Keratinocyte (primary cell): ENCODE measurements at regions of chr6 and their contacts with region 1.

Region 1: GRCh38 chr6:20038410-20039204 is 173.7 kb downstream of the MBOAT1 start:
- DNase-seq: no peak
- H3K4me3 ChIP-seq: no peak overlapping the region
- H3K27ac ChIP-seq: no peak overlapping the region
- H3K4me1 ChIP-seq: no peaks in the 10 kb centered on the region
- H3K27me3 ChIP-seq: no peaks in the 10 kb centered on the region
- CTCF ChIP-seq: no peak

Region 2: DNA sequence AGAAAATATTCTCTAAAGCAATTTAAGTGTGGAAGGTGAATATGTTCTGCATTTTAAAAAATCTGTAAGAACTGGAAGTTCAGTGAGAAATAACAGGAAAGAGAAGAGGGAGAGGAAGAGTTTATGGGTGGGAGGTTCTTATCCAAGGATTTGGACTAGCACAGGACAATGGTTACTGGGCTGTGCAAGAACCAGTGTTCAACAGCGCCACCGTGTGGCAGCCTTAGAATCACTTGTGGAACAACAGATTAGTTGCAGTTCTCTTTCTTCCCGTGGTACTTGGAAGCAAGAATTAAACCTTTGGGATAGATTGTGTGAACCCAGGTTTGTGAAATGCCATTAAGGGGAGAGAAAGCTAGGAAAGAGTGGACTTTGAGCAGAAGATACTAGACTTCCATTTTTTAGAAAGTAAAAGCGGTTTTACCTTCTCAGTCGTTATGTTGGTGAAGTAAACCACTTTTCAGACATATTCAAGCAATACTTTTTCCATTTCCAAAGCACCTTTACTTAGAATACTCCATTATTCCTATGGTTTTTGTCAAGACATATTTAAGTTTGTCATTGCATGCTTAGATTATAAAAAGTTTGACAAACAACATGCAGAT is 1214.7 kb before region 1 on chr6:
- dilution Hi-C with region 1: loop called (anchors 10 kb)
- DNase-seq: no peak
- H3K4me3 ChIP-seq: no peak overlapping the region
- H3K27ac ChIP-seq: no peak overlapping the region
- H3K4me1 ChIP-seq: no peaks in the 10 kb centered on the region
- H3K27me3 ChIP-seq: no peaks in the 10 kb centered on the region
- CTCF ChIP-seq: peak; percentile 61 to 71 (median 67)

Region 3: DNA sequence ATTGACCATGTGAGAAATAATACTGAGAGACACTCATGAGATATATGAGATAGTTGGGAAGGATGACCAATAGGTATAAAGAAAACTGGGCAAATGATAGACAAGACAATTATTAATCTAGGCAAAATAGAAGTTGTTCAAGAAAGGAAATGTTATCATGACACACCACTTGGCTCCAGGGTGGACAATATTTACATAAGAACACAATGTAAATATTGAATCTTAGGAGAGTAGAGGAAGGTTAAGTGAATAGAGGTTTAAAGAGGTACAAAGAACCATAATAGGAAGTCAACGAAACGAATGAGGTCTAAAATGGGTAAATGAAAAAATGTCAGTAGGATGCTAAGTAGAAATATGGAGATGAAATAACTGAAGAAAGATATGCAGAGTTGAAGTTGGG is 47.2 kb after region 1 on chr6:
- dilution Hi-C with region 1: no loop called
- DNase-seq: no peak
- H3K4me3 ChIP-seq: no peak overlapping the region
- H3K27ac ChIP-seq: no peak overlapping the region
- H3K4me1 ChIP-seq: no peaks in the 10 kb centered on the region
- H3K27me3 ChIP-seq: no peaks in the 10 kb centered on the region
- CTCF ChIP-seq: no peak